IMR-90 (cell line): ENCODE measurements at regions of chr6 and their contacts with region 1.

Region 1: DNA sequence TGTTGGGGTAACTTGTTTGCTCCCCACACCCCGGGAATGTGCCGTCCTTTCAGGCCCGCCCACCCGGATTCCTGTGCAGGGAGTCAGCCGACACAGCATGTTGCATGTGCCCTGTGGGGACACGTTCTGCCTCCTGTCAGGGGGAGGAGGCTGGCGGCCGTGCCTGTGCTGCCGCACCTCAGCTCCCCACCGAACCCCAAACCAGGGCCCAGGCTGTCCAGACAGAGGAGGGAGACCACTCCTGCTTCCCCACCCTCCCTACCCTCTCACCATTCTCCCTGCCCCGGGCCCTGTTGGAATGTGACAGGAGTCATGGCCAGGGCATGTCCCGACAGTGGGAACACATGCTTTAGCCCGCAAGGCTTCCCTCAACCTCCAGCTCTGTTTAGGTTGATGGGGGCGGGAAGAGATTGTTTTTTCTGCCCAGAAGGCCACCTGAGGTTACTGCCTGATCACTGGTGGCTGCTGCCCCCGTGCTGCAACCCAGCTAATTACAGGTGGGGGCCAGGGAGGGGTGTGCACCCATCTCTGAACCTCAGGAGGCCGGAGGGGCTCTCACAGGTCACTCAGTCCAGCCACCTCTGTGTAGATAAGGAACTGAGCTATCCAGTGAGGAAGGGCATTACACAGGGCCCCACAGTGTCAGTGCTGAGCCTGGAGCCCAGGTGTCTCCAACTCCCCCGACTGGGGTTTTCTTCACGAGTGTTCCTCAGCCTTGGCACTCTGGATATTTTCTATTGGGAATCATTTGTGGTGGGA is 13.6 kb downstream of the LRRC73 start:
- DNase-seq: peak; percentile 62
- ATAC-seq: peak; percentile 70
- H3K4me3 ChIP-seq: no peak overlapping the region
- H3K27ac ChIP-seq: peak overlapping the region; percentile 61
- H3K4me1 ChIP-seq: peaks cover 46% of the 10 kb centered on the region
- H3K27me3 ChIP-seq: no peaks in the 10 kb centered on the region
- CTCF ChIP-seq: peak; percentile 77
- POLR2A ChIP-seq: no peak
- RAD21 ChIP-seq: peak; percentile 85

Region 2: GRCh38 chr6:41878246-41878645 is 1618.3 kb before region 1 on chr6:
- CTCF ChIA-PET with region 1: no interaction called
- POLR2A ChIA-PET with region 1: no interaction called
- dilution Hi-C with region 1: no loop called
- in situ Hi-C with region 1: no loop called
- intact Hi-C with region 1: no loop called
- DNase-seq: peak; percentile 68
- ATAC-seq: peak; percentile 77
- H3K4me3 ChIP-seq: no peak overlapping the region
- H3K27ac ChIP-seq: no peak overlapping the region
- H3K4me1 ChIP-seq: peaks cover 5% of the 10 kb centered on the region; the same call in 1 of the 2 replicates
- H3K27me3 ChIP-seq: no peaks in the 10 kb centered on the region
- CTCF ChIP-seq: no peak
- POLR2A ChIP-seq: no peak
- RAD21 ChIP-seq: no peak

Region 3: DNA sequence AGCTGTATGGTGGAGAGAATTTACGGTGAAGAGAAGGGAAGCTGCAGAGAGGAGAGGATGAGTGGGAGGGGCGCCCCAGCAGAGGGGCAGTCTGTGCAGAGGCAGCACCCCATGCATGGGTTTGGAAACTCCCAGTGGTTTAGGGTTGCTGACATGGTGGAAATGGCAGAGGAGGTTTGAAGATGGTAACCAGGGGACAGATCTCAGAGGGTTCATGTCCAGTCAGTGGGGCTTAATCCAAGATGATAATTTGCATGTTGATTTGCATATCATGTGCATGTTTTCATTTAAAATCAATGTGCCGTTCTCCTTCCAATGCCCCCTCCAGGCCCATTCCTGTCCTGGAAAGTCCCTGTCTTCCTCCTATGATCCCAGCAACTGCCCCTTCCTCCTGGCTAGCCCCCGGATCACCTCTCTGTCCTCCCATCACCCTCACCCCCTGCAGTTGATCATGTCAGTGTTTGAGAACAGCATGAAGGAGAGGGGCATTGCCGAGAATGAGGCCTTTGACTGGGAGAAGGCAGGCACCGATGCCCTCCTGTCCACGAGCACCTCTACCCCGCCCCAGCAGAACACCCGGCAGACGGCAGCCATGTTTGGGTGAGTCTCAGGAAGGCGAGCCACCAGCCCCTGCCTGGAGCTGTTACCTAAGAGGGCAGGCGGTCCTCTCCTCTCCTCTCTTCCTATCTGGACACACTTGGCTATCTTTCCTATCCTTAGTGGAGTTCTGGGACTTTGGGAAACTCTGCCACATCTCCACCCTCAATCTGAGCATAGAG is 239.0 kb before region 1 on chr6:
- CTCF ChIA-PET with region 1: no interaction called
- POLR2A ChIA-PET with region 1: no interaction called
- dilution Hi-C with region 1: no loop called
- in situ Hi-C with region 1: loop called (anchors 5 kb)
- intact Hi-C with region 1: no loop called
- DNase-seq: no peak
- ATAC-seq: no peak
- H3K4me3 ChIP-seq: no peak overlapping the region
- H3K27ac ChIP-seq: no peak overlapping the region
- H3K4me1 ChIP-seq: no peaks in the 10 kb centered on the region
- H3K27me3 ChIP-seq: peaks cover 48% of the 10 kb centered on the region
- CTCF ChIP-seq: no peak
- POLR2A ChIP-seq: no peak
- RAD21 ChIP-seq: no peak

Region 4: DNA sequence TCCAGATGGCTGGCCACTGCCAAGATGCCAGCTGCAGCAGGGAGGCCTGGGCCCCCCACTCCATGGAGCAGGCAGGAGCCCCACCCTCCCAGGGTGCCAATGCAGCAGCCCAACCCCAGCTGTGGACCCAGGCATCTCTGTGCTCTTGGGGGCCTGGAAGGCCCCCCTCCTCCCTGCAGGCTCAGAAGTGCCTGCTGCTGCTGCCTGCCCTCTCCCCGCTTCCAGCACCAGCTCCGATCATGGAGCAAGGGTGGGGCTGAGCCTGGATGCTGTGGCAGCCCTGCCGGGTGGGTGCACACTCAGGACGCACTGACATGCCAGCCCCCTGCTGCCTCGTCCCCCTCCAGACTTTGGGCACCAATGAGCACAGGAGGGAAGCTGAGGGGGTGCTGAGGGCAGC is 84.0 kb before region 1 on chr6:
- CTCF ChIA-PET with region 1: no interaction called
- POLR2A ChIA-PET with region 1: no interaction called
- dilution Hi-C with region 1: no loop called
- in situ Hi-C with region 1: no loop called
- intact Hi-C with region 1: no loop called
- DNase-seq: no peak
- ATAC-seq: no peak
- H3K4me3 ChIP-seq: no peak overlapping the region
- H3K27ac ChIP-seq: no peak overlapping the region
- H3K4me1 ChIP-seq: no peaks in the 10 kb centered on the region
- H3K27me3 ChIP-seq: peaks cover 26% of the 10 kb centered on the region
- CTCF ChIP-seq: no peak
- POLR2A ChIP-seq: no peak
- RAD21 ChIP-seq: no peak

Region 5: GRCh38 chr6:43444036-43444435 is 52.5 kb before region 1 on chr6:
- CTCF ChIA-PET with region 1: no interaction called
- POLR2A ChIA-PET with region 1: no interaction called
- dilution Hi-C with region 1: no loop called
- in situ Hi-C with region 1: loop called (anchors 10 kb)
- intact Hi-C with region 1: no loop called
- DNase-seq: no peak
- ATAC-seq: no peak
- H3K4me3 ChIP-seq: no peak overlapping the region
- H3K27ac ChIP-seq: no peak overlapping the region
- H3K4me1 ChIP-seq: no peaks in the 10 kb centered on the region
- H3K27me3 ChIP-seq: no peaks in the 10 kb centered on the region
- CTCF ChIP-seq: no peak
- POLR2A ChIP-seq: no peak
- RAD21 ChIP-seq: no peak

Region 6: GRCh38 chr6:43461936-43462335 is 34.6 kb before region 1 on chr6:
- CTCF ChIA-PET with region 1: interaction called, 3 read pairs
- POLR2A ChIA-PET with region 1: no interaction called
- dilution Hi-C with region 1: no loop called
- in situ Hi-C with region 1: loop called (anchors 5 kb)
- intact Hi-C with region 1: no loop called
- DNase-seq: no peak
- ATAC-seq: no peak
- H3K4me3 ChIP-seq: no peak overlapping the region
- H3K27ac ChIP-seq: no peak overlapping the region
- H3K4me1 ChIP-seq: no peaks in the 10 kb centered on the region
- H3K27me3 ChIP-seq: peaks cover 20% of the 10 kb centered on the region
- CTCF ChIP-seq: no peak
- POLR2A ChIP-seq: no peak
- RAD21 ChIP-seq: no peak

Region 7: GRCh38 chr6:43506667-43507471 is 10.3 kb after region 1 on chr6:
- CTCF ChIA-PET with region 1: interaction called, 17 read pairs
- POLR2A ChIA-PET with region 1: no interaction called
- dilution Hi-C with region 1: no loop called
- in situ Hi-C with region 1: no loop called
- intact Hi-C with region 1: no loop called
- DNase-seq: peak; percentile 78
- ATAC-seq: peak; percentile 58
- H3K4me3 ChIP-seq: no peak overlapping the region
- H3K27ac ChIP-seq: no peak overlapping the region
- H3K4me1 ChIP-seq: peaks cover 4% of the 10 kb centered on the region
- H3K27me3 ChIP-seq: no peaks in the 10 kb centered on the region
- CTCF ChIP-seq: peak; percentile 98
- POLR2A ChIP-seq: 0 out of 2 replicates have a peak, but pooled peaks have one; percentile 30
- RAD21 ChIP-seq: peak; percentile 94

Region 8: DNA sequence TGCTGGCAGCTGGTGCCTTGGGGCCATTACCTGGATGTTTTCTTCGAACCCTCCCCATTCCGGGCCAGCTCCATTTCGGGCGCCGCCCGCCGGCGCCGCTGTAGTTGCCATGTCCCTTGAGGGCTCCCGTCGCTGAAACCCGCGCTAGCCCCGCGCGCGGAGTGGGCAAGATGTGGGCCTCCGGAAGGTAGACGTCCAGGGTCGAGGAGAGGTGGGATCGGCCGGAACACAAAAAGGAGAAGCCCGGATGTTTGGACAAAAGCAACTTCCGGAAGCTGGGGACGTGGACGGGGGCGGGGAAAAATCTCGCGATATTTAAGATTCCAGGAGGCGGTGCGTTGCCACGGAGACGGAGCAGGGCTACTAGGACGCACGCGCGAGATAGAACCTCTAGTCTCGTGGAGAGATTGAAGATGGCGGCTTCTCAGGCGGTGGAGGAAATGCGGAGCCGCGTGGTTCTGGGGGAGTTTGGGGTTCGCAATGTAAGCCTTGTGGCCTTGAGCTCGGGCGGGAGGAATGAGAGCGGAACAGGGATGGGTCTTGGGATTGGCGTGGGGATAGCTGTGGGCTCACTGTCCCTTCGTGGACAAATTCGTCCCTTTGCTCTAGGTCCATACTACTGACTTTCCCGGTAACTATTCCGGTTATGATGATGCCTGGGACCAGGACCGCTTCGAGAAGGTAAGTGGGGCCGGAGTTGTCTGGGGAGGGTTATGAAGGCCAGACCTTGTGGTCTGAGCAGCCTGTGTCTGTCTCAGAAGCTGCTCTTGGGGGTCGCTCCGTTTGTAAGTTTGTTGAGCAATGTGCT is 20.4 kb after region 1 on chr6 and contains the starts of genes POLR1C and YIPF3:
- CTCF ChIA-PET with region 1: no interaction called
- POLR2A ChIA-PET with region 1: no interaction called
- dilution Hi-C with region 1: no loop called
- in situ Hi-C with region 1: no loop called
- intact Hi-C with region 1: no loop called
- DNase-seq: peak; percentile 97
- ATAC-seq: peak; percentile 91
- H3K4me3 ChIP-seq: peak within 1 kb of the TSS; percentile 80
- H3K27ac ChIP-seq: peak within 1 kb of the TSS; percentile 83
- H3K4me1 ChIP-seq: peaks cover 10% of the 10 kb centered on the region
- H3K27me3 ChIP-seq: no peaks in the 10 kb centered on the region
- CTCF ChIP-seq: no peak
- POLR2A ChIP-seq: peak; percentile 90
- RAD21 ChIP-seq: no peak
- total RNA-seq, gene POLR1C: 69.4 and 72.6 TPM in 2 replicates
- total RNA-seq, gene YIPF3: 114 and 120 TPM in 2 replicates